ENCODE measurements at regions of chr4 and their contacts with region 1.

Region 1: GRCh38 chr4:108155373-108155772 is 13.4 kb downstream of the LEF1 start:
- DNase-seq: no peak
- ATAC-seq: peak; percentile 28
- H3K4me3 Mint-ChIP-seq: peak overlapping the region; percentile 80
- H3K27ac Mint-ChIP-seq: peak overlapping the region; percentile 70
- H3K4me1 Mint-ChIP-seq: peaks cover 76% of the 10 kb centered on the region
- H3K27me3 Mint-ChIP-seq: no peaks in the 10 kb centered on the region

Region 2: GRCh38 chr4:108008721-108009120 is 146.7 kb before region 1 on chr4:
- POLR2A ChIA-PET with region 1: no interaction called
- DNase-seq: no peak
- ATAC-seq: no peak
- H3K4me3 Mint-ChIP-seq: no peak overlapping the region
- H3K27ac Mint-ChIP-seq: no peak overlapping the region
- H3K4me1 Mint-ChIP-seq: peaks cover 13% of the 10 kb centered on the region
- H3K27me3 Mint-ChIP-seq: no peaks in the 10 kb centered on the region

Region 3: DNA sequence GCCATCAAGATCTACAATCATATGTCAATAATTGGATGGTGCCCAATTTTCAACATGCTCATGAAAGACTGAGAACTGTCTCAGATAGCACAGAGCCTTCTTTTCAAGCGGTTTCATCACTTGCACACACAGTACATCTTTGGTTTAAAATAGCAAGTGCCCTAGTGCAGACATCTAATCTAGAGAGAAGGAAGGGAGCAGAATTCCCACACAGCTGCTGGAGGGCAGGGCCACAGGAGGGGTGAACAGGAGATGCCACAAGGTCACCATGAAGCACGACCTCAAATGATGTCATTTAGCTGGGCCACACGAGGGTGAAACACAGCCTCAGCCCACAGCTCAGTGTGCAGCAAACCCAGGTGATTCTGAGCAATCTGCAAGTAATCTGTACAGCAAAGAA is 10.9 kb before region 1 on chr4:
- POLR2A ChIA-PET with region 1: interaction called, 27 read pairs
- DNase-seq: peak; percentile 58
- ATAC-seq: peak; percentile 51
- H3K4me3 Mint-ChIP-seq: peak overlapping the region; percentile 76
- H3K27ac Mint-ChIP-seq: peak overlapping the region; percentile 78
- H3K4me1 Mint-ChIP-seq: peaks cover 77% of the 10 kb centered on the region
- H3K27me3 Mint-ChIP-seq: no peaks in the 10 kb centered on the region

Region 4: DNA sequence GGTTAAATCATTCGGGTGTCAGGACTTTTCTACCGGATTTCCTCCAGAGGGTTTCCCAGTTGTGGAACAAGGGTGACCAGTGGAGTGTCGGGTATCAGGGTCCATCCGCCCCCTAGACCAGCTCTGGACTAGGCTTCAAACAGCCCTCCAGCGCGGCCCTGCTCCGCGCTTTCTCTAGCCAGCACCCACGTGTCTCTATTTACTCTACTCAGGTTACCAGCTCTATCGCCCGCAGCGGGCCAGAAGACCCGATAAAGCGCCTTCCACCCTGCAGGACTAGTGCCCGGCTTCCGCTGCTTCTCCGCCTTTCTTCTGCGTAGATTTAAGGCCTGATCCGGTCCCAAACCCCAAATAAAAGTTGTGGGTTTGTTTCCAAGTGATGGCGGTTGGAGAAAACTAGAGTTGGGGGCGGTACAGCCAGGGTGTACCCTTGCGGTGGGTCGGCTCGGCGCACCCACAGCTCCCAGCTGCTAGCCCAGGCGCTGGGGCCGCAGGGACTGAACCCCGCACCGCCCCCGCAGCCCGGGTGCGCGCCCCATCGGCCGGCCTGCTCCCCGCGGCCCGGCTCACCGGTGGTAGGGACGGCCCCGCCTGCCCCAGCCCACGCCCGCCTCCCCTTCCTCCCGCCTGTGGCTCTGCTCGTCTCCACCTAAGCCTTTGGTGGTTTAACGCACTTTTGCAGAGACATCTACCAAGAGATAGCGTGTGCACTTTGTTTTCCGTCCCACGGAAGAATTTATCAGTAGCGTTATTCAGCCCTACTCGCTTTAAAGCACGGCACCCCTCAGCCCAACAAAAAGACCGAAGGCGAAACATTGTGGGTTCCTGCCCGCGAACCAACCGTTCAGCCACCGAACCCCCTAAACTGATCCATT is 11.3 kb after region 1 on chr4:
- POLR2A ChIA-PET with region 1: interaction called, 16 read pairs
- DNase-seq: peak; percentile 80
- ATAC-seq: peak; percentile 49
- H3K4me3 Mint-ChIP-seq: peak overlapping the region; percentile 98
- H3K27ac Mint-ChIP-seq: peak overlapping the region; percentile 96
- H3K4me1 Mint-ChIP-seq: peaks cover 30% of the 10 kb centered on the region
- H3K27me3 Mint-ChIP-seq: peaks cover 5% of the 10 kb centered on the region

Region 5: DNA sequence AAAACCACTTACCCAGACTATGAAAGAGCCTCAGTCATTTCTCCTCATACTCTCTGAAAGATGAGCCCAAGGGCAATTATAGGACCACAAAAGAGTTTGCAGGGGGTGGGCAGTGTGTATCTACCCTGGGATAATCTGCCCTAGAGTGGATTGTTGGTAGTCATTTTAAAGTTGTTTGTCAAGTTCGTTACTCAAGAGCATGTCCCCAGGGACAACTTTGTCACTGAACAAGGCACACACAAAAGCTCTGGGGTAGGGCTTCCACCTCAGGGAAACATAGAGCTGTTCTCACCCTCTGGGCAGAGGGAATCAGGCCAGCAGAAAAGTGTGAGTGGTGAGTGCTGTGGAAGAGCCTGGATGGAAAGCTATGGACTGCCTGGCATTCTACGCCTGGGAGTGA is 36.6 kb after region 1 on chr4:
- POLR2A ChIA-PET with region 1: no interaction called
- DNase-seq: no peak
- ATAC-seq: no peak
- H3K4me3 Mint-ChIP-seq: no peak overlapping the region
- H3K27ac Mint-ChIP-seq: no peak overlapping the region
- H3K4me1 Mint-ChIP-seq: peaks cover 12% of the 10 kb centered on the region
- H3K27me3 Mint-ChIP-seq: no peaks in the 10 kb centered on the region

Measured in activated naive CD8-positive, alpha-beta T cell treated with anti-CD3 and anti-CD28 coated beads, Interleukin-2, amount 10 ng/mL, durations not matched to agents 7 days and 5 days (primary cell).